ENCODE measurements at regions of chr4 and their contacts with region 1.

Region 1: GRCh38 chr4:37383579-37384229 is 139.2 kb downstream of the NWD2 start:
- DNase-seq: peak; percentile 30
- ATAC-seq: peak; percentile 79
- H3K4me3 ChIP-seq: no peak overlapping the region
- H3K27ac ChIP-seq: no peak overlapping the region
- H3K4me1 ChIP-seq: 0 out of 2 replicates have a peak, but pooled peaks cover 4% of the 10 kb centered on the region
- H3K27me3 ChIP-seq: no peaks in the 10 kb centered on the region; a peak in 1 of 5 replicates
- CTCF ChIP-seq: peak; percentile 68
- EP300 ChIP-seq: no peak
- POLR2A ChIP-seq: no peak
- RAD21 ChIP-seq: no peak

Region 2: DNA sequence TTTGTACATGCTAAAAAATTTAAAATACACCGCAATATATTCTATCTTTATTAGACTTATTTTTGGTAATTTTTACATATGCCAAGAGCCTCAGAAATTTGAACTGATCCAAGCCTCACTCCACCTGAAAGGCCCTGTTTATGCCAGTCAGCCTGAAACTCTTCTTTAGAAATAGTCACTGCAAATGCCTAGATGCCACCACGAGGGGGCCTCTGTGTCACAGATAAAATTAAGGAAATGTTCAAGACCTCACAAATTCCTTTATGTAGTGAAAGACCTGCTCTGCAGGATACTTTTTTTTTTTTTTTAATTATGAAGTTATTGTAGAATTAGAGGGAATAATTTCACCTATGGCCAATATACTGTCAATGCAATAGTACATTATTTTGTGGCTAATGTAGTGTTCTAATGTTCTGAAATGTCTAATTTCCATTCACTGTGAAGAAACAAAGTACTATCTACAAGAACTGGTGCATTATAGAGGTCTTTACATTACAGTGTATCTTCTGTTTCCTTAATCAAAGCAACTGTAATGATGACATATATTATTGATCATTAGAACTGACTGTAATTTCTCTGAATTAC is 1032.5 kb before region 1 on chr4:
- CTCF ChIA-PET with region 1: interaction called, 15 read pairs
- POLR2A ChIA-PET with region 1: no interaction called
- in situ Hi-C with region 1: loop called (anchors 5 kb)
- intact Hi-C with region 1: loop called (anchors 2 kb)
- DNase-seq: peak; percentile 19
- ATAC-seq: peak; percentile 68
- H3K4me3 ChIP-seq: no peak overlapping the region
- H3K27ac ChIP-seq: no peak overlapping the region
- H3K4me1 ChIP-seq: no peaks in the 10 kb centered on the region
- H3K27me3 ChIP-seq: no peaks in the 10 kb centered on the region
- CTCF ChIP-seq: peak; percentile 62
- EP300 ChIP-seq: no peak
- POLR2A ChIP-seq: no peak
- RAD21 ChIP-seq: no peak

Region 3: DNA sequence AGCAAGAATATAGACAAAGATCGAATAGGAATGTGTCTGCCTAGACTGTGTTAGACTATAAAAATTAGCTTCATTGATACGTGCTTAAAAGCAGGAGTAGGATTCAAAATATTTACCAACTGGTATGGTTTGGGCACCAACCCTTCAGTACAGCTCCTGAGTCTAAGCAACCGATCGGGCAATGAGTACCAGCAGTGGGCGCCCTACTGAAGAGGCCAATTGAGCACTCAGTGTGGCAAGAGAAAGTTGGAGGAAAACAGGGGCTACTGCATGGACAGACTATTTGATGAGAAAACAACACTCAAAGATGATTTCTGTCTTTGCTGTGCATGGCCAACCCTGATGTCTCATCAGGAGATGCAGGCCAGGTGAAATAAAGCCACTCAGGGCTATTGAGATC is 315.1 kb before region 1 on chr4:
- CTCF ChIA-PET with region 1: no interaction called
- POLR2A ChIA-PET with region 1: no interaction called
- in situ Hi-C with region 1: no loop called
- intact Hi-C with region 1: loop called (anchors 1 kb)
- DNase-seq: peak; percentile 2
- ATAC-seq: peak; percentile 75
- H3K4me3 ChIP-seq: no peak overlapping the region
- H3K27ac ChIP-seq: no peak overlapping the region
- H3K4me1 ChIP-seq: no peaks in the 10 kb centered on the region
- H3K27me3 ChIP-seq: no peaks in the 10 kb centered on the region
- CTCF ChIP-seq: peak; percentile 52
- EP300 ChIP-seq: no peak
- POLR2A ChIP-seq: no peak
- RAD21 ChIP-seq: no peak

Region 4: GRCh38 chr4:37188100-37188499 is 195.6 kb before region 1 on chr4:
- CTCF ChIA-PET with region 1: no interaction called
- POLR2A ChIA-PET with region 1: no interaction called
- in situ Hi-C with region 1: loop called (anchors 10 kb)
- intact Hi-C with region 1: loop called (anchors 1 kb)
- DNase-seq: peak; percentile 10
- ATAC-seq: peak; percentile 47; the same call in 1 of the 3 replicates
- H3K4me3 ChIP-seq: no peak overlapping the region
- H3K27ac ChIP-seq: no peak overlapping the region
- H3K4me1 ChIP-seq: no peaks in the 10 kb centered on the region
- H3K27me3 ChIP-seq: no peaks in the 10 kb centered on the region
- CTCF ChIP-seq: peak; percentile 62
- EP300 ChIP-seq: no peak
- POLR2A ChIP-seq: no peak
- RAD21 ChIP-seq: no peak

Region 5: GRCh38 chr4:37324546-37324945 is 59.2 kb before region 1 on chr4:
- CTCF ChIA-PET with region 1: no interaction called
- POLR2A ChIA-PET with region 1: no interaction called
- in situ Hi-C with region 1: no loop called
- intact Hi-C with region 1: no loop called
- DNase-seq: peak; percentile 49
- ATAC-seq: peak; percentile 80
- H3K4me3 ChIP-seq: no peak overlapping the region
- H3K27ac ChIP-seq: no peak overlapping the region
- H3K4me1 ChIP-seq: peaks cover 50% of the 10 kb centered on the region
- H3K27me3 ChIP-seq: no peaks in the 10 kb centered on the region
- CTCF ChIP-seq: no peak
- EP300 ChIP-seq: peak in 1 of 2 experiments; percentile 54; a peak in 2 of 4 replicates
- POLR2A ChIP-seq: no peak
- RAD21 ChIP-seq: no peak